Left ventricle myocardium inferior (tissue), 1 donor: ENCODE measurements at regions of chr4 and their contacts with region 1.

Region 1: DNA sequence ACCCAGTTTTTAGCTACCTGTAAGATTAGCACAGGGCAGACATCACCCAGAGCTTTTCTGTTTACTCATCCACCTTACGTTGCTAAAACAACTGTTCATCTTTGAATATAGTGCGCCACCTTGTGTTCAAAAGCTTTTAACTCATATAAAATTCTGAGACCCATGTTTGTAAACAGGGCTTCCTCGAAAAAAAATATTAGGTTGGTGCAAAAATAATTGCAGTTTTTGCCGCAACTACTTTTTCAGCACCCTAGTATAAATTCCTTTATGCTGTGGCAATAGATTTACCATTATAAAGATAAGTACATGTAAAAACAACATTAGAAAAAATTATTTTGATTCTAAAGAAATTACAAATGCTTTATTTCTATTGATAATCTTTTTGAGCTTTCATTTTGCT is 147.9 kb downstream of the LRBA start:
- DNase-seq: no peak
- H3K4me3 ChIP-seq: no peak overlapping the region
- H3K27ac ChIP-seq: no peak overlapping the region
- H3K4me1 ChIP-seq: no peaks in the 10 kb centered on the region
- H3K27me3 ChIP-seq: no peaks in the 10 kb centered on the region
- CTCF ChIP-seq: peak; percentile 73

Region 2: GRCh38 chr4:150302553-150302952 is 564.6 kb before region 1 on chr4:
- intact Hi-C with region 1: loop called (anchors 10 kb)
- DNase-seq: no peak
- H3K4me3 ChIP-seq: no peak overlapping the region
- H3K27ac ChIP-seq: no peak overlapping the region
- H3K4me1 ChIP-seq: no peaks in the 10 kb centered on the region
- H3K27me3 ChIP-seq: no peaks in the 10 kb centered on the region
- CTCF ChIP-seq: no peak